ENCODE measurements at regions of chr7 and their contacts with region 1.

Region 1: DNA sequence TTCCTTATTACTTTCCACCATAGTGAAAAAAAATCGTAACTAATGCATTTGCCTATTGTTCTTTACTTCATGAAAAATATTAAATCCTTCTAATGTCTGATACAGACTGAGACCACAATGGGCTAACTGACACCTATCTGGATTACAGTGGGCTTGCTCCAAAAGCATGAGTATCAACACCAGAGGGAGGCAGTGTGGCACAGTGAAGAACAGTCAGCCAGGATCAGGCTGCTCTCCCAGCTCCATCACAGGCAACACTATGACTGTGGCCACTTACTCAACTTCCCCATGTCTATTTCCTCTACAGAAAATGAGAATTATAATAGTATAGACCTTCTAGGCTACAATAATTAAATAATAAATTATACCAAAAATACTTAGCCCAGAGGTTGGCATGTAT is 97.2 kb downstream of the SLC25A13 start:
- DNase-seq: no peak
- H3K4me3 ChIP-seq: no peak overlapping the region
- H3K27ac ChIP-seq: no peak overlapping the region
- H3K4me1 ChIP-seq: no peaks in the 10 kb centered on the region
- H3K27me3 ChIP-seq: no peaks in the 10 kb centered on the region
- CTCF ChIP-seq: peak; percentile 48 to 71 (median 62)
- EP300 ChIP-seq: no peak
- POLR2A ChIP-seq: no peak
- RAD21 ChIP-seq: peak; percentile 74 to 80

Region 2: GRCh38 chr7:96198047-96198636 is 26.5 kb before region 1 on chr7:
- CTCF ChIA-PET with region 1: interaction called, 12 read pairs
- POLR2A ChIA-PET with region 1: no interaction called
- DNase-seq: no peak
- H3K4me3 ChIP-seq: no peak overlapping the region
- H3K27ac ChIP-seq: no peak overlapping the region
- H3K4me1 ChIP-seq: peaks cover 0 to 3% (median 2%) of the 10 kb centered on the region in 4 experiments; a peak in 3 of 7 replicates
- H3K27me3 ChIP-seq: no peaks in the 10 kb centered on the region; a peak in 3 of 7 replicates
- CTCF ChIP-seq: no peak
- EP300 ChIP-seq: no peak
- POLR2A ChIP-seq: no peak
- RAD21 ChIP-seq: no peak; a peak in 1 of 4 replicates

Region 3: GRCh38 chr7:96236198-96237039 is 11.7 kb after region 1 on chr7:
- CTCF ChIA-PET with region 1: interaction called, 11 read pairs
- POLR2A ChIA-PET with region 1: no interaction called
- DNase-seq: no peak
- H3K4me3 ChIP-seq: no peak overlapping the region
- H3K27ac ChIP-seq: no peak overlapping the region
- H3K4me1 ChIP-seq: no peaks in the 10 kb centered on the region
- H3K27me3 ChIP-seq: no peaks in the 10 kb centered on the region
- CTCF ChIP-seq: no peak
- EP300 ChIP-seq: no peak
- POLR2A ChIP-seq: no peak
- RAD21 ChIP-seq: no peak